ENCODE measurements at regions of chr10 and their contacts with region 1.

Region 1: DNA sequence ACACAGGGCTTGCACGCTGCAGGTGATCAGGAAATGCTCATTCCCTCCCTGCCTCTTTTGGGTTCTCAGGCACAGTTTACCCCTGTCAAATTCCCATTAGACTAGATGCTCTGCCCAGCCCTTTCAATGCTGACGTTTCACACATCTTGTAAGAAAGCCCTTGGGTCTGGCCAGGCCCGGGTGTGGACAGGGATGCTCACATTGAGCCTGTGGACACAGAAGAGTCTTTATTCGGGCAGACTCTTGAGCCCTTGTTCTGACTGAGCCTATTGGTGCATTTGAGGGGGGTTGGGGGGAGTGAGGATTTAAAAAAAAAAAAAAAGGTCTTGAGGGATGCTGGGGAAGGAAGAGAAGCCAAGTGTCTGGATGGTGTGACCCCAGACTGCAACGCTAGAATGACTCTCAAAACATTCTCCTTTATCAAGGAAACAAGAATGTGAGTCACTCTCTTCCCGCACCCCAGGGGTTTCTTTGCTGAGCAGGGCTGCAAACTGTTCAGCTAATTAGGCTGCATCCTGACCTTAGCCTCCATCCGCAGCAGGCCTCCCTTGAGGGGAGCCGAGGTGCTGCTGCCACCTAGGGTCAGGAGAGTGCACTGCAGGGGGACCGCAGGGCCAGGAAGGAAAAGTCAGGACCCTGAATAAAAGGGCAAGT is 53.6 kb upstream of the TMEM72 start:
- DNase-seq: peak; percentile 30
- H3K4me3 Mint-ChIP-seq: no peak overlapping the region
- H3K27ac Mint-ChIP-seq: no peak overlapping the region
- H3K4me1 Mint-ChIP-seq: no peaks in the 10 kb centered on the region
- H3K27me3 Mint-ChIP-seq: peaks cover 3% of the 10 kb centered on the region

Region 2: DNA sequence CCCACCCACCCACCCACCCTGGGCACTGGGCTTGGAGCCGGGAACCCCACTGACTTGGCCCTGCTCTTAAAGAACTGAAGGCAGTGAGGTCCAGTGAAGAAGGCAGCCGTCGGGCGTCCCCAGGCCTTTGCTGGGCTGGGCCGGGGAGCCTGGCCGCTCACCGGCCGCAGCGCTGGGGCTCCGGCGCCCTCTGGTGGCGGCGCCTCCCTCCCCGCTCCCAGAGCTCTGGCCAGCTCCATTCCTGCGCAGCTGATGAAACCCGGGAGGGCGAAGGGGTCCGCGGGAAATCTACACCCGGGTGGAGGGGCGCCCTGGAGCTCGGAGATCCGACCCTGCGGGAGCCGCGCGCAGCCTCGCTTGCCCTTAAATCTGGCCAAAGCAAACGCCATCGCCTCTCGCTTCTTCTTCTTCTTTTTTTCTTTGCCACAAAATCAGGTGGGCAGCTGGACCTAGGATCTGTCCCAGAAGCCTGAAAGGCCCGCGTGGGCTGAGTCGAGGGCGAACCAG is 470.9 kb before region 1 on chr10:
- intact Hi-C with region 1: loop called (anchors 10 kb)
- DNase-seq: no peak
- H3K4me3 Mint-ChIP-seq: no peak overlapping the region
- H3K27ac Mint-ChIP-seq: no peak overlapping the region
- H3K4me1 Mint-ChIP-seq: no peaks in the 10 kb centered on the region
- H3K27me3 Mint-ChIP-seq: peaks cover 30% of the 10 kb centered on the region